Cardiac septum (tissue), 1 donor: ENCODE measurements at regions of chr3 and their contacts with region 1.

Region 1: GRCh38 chr3:172039436-172040077 is at the start of gene FNDC3B:
- DNase-seq: peak; percentile 97
- total RNA-seq, gene FNDC3B: 139 TPM

Region 2: DNA sequence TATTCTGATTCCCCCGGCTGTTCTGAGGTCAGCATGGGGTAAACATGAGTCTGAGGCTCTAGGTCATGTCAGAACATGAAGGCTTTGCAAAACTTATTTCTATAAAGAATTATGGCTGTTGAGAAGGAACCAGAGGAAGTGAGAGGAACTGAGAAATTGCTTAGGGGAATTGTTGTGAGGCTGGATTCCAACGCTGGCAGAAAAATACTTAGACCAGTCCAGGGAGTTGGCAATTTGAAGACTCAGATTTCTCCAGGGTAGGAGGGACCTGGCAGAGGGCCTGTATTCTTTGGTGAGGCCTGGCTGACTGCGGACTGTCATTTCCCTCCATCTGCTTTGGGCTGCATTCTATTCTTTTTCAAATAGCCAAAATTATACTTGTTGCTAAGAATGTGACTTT is 384.7 kb before region 1 on chr3:
- intact Hi-C with region 1: loop called (anchors 10 kb)
- DNase-seq: peak; percentile 77

Region 3: DNA sequence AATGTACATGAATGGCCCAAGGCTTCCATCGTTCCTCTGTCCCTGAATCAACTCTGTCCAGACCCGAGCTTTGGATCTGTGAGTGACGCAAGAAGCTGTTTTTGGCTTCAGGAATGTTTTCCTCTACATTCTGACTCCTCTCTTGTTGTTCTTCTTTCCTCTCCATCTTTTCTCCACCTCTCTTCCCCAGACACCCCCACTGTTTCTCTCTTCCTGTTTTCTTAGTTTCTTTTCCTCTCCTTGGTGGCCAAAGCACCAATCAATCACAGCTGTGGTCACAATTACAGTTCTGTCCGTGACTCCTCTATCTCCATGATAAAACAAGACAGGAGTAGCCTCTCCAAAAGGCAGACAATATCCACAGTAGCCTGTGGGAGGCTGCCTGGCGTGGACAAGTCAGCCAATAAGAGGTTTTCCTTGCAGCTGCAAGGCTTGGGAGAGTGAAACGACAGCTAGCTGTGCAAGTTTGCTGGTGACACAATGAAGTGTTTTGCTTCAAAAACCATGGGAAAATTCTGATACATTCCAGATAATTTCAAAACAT is 201.3 kb before region 1 on chr3:
- intact Hi-C with region 1: loop called (anchors 5 kb)
- DNase-seq: no peak

Region 4: GRCh38 chr3:172129870-172130683 is 90.5 kb after region 1 on chr3:
- intact Hi-C with region 1: loop called (anchors 2 kb)
- DNase-seq: peak; percentile 95

Region 5: DNA sequence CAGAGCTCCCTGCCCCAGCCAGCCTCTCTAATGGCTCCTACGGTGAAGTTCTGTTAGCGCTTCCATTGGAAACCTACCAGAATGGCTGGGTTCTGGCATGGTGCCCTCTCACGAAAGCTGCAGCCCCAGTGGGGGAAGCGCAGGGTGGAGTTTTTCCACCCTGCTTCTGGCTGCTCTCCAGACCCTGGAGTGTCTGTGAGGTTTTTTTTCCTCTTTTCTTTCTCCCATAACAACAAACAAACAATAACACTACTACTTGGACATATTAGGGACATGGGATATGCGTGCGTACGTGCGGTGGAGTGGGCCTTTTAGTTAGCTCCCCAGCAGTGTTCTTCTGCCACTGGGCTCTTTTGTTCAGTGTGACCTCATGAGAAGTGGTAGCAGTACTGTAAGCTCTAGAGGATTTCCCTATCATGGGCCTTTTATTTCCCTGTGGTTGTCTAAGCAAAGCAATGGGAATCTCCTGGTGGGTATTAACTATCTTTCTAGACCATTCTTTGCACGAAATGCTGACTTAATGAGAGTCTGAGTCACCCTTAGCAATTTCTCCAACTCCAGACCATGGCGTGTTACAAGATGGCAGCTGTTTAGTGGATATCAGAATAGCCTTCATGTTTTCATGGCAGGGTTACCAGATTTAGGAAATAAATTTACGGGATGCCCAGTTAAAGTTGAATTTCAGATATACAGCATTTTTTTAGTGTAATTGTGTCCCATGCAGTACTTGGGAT is 161.7 kb after region 1 on chr3:
- intact Hi-C with region 1: loop called (anchors 2 kb)
- DNase-seq: peak; percentile 90

Region 6: DNA sequence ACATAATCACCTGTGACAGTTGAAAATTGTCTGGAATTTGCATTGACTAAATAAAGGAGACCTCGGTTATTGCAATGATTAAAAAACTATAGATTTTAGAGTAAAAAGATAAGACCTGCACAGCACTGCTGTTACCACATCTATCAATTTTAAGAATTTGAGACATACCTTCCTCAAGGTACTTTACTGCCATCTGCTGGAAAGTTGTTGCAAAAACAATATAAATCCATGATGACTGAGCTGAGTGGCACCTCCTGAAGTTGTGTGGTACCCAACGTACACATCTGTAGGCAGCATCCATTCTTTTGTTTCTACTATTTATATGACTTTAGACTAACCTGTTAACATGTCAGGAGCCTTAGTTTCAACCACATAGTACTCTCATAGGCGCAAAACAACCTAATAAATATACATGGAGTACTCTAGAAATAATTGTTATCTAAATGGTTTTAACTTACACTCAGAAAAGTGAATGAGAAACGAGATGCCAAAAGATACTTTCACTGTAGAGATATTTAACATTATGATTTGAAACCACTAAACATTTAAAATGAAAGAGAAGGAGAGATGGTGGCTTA is 302.0 kb after region 1 on chr3:
- intact Hi-C with region 1: loop called (anchors 5 kb)
- DNase-seq: no peak